ENCODE measurements at regions of chr4 and their contacts with region 1.

Region 1: DNA sequence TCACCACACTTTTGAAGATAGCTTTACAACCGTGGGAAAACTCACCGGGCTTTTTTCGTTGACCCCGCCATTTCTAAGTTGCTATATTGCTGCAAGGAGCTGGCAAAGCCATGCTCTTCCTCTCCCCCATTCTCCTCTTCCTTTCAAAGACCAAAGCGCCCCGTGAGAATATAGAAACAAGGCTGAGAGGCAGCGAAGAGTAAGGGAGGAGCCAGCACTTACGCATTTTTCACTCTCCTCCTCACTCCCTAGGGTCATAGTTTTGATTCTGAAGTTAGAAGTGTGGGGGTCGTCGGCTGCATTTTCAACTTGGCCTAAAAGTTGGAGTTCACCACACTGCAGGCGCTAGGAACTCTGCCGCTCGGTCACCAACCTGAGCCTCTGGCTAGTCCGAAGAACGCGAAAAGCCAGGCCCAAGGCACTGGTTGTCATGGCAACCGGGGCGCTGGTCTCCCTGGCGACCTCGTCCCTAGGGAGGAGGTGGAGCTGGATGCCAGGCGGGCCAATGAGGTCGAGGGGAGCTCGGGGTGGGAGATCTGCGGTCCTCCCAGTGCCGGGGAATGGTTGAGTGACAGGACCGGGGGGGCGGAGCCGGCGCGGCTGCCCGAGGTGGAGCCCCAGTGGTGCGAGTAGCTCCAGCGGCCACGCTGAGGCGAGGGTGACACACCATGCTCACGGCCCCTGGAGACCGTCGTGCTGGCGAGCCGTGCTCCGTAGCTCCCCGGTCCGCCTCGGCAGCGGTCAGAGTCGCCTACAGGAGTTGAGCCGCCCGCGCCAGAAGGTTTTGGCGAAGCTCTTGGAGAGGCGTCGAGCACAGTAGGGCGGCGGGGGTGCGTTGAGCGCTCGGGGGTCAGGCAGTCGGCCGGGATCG is at the start of gene PTPN13:
- DNase-seq: peak; percentile 70 to 100 (median 99)
- H3K4me3 ChIP-seq: peak within 1 kb of the TSS; percentile 51 to 93 (median 82)
- H3K27ac ChIP-seq: peak within 1 kb of the TSS; percentile 44 to 96 (median 90)
- H3K27me3 ChIP-seq: no peaks in the 10 kb centered on the region
- CTCF ChIP-seq: peak in 26 of 56 donors; percentile 0 to 59 (median 22)
- total RNA-seq, gene PTPN13: 25.4 to 145 (median 48.0) TPM

Region 2: GRCh38 chr4:86497980-86498862 is 95.7 kb before region 1 on chr4:
- intact Hi-C with region 1: loop called (anchors 10 kb)
- DNase-seq: peak in 2 of 10 donors; percentile 7 to 10
- H3K4me3 ChIP-seq: peak overlapping the region in 19 of 59 donors; percentile 0 to 44 (median 17)
- H3K27ac ChIP-seq: peak overlapping the region in 49 of 59 donors; percentile 1 to 85 (median 62)
- H3K27me3 ChIP-seq: no peaks in the 10 kb centered on the region
- CTCF ChIP-seq: peak; percentile 59 to 91 (median 82)

Region 3: DNA sequence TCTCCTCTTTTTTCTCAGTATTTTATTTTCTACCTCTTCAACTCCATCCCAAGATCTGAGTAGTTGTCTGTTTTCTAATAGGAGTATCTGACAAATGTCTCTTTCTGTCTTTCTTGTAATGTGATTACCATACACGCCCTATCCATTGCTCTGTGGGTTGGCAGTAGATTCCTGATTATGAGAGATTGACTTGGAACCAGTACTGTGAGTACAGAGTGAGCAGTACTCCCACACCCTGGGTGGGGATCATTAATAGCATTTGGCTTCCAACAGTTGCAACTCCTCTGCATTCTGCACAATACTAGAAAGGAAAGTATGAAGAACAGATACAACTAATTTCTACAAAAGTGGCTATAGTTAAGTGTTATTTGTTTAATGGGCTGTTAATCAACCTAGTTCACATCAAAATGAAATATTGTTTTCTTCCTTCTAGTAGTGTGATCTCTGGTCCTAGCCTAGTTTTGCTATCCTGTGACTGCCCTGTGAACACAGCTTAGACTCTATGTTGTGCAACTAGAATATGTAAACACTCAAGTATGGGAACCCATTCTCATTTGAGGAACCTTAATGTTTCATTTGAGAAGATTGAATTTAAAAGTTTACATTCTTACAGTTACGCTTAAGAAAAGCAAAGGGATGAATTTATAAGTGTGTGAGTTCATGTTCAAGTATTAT is 113.1 kb after region 1 on chr4:
- intact Hi-C with region 1: no loop called
- DNase-seq: no peak
- H3K4me3 ChIP-seq: no peak overlapping the region
- H3K27ac ChIP-seq: no peak overlapping the region
- H3K27me3 ChIP-seq: no peaks in the 10 kb centered on the region
- CTCF ChIP-seq: no peak

Region 4: GRCh38 chr4:86720508-86721068 is 126.7 kb after region 1 on chr4:
- intact Hi-C with region 1: loop called in 1 of 2 experiments (anchors 2 kb)
- DNase-seq: no peak
- H3K4me3 ChIP-seq: peak overlapping the region in 14 of 59 donors; percentile 4 to 40 (median 16)
- H3K27ac ChIP-seq: peak overlapping the region in 57 of 59 donors; percentile 14 to 93 (median 80)
- H3K27me3 ChIP-seq: no peaks in the 10 kb centered on the region
- CTCF ChIP-seq: no peak